Activated CD4-positive, alpha-beta T cell treated with anti-CD3 and anti-CD28 coated beads, Interleukin-2, amount 10 ng/mL, durations not matched to agents 24 days and 14 days (primary cell): ENCODE measurements at regions of chr1 and their contacts with region 1.

Region 1: GRCh38 chr1:63615768-63616420 is 22.7 kb downstream of the PGM1 start:
- DNase-seq: peak; percentile 92
- H3K4me3 Mint-ChIP-seq: no peak overlapping the region
- H3K27ac Mint-ChIP-seq: no peak overlapping the region
- H3K4me1 Mint-ChIP-seq: peaks cover 7% of the 10 kb centered on the region
- H3K27me3 Mint-ChIP-seq: no peaks in the 10 kb centered on the region

Region 2: GRCh38 chr1:63601061-63601460 is 14.8 kb before region 1 on chr1:
- intact Hi-C with region 1: no loop called
- DNase-seq: no peak
- H3K4me3 Mint-ChIP-seq: no peak overlapping the region
- H3K27ac Mint-ChIP-seq: no peak overlapping the region
- H3K4me1 Mint-ChIP-seq: peaks cover 9% of the 10 kb centered on the region
- H3K27me3 Mint-ChIP-seq: no peaks in the 10 kb centered on the region

Region 3: DNA sequence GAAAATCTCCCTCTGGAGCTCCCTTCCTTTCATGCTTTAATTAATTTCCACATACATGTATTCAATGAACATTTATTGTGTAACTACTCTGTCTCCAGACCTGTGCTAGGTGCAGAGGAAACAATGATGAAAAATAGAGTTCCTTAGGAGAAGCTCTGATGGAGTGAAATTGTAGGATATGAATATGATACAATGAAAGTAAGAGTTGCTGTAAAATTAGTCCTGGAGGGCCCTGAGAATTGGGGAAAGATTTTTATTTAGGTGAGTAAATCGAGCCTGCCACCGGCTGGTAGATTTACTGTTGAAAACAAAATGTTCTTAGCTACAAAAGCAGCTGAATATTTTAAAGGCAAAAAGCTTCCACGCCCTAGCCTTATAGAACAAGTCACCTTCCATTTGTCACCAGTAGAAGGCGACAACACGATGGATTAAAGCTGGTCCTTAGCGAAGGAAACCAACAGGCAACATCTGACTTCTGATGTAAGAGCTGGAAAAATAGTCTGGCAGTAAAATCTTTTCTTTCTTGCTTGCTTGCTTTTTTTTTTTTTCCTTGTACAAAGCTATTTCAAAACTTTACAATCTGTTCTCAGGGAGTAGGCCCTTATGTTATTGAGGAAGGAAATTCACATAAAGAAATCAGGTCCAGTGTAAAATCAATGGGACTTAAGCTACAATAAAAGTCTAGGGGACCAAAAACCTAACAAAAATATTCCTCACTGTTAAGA is 76.0 kb after region 1 on chr1:
- intact Hi-C with region 1: loop called (anchors 5 kb)
- DNase-seq: peak; percentile 81
- H3K4me3 Mint-ChIP-seq: no peak overlapping the region
- H3K27ac Mint-ChIP-seq: no peak overlapping the region
- H3K4me1 Mint-ChIP-seq: peaks cover 1% of the 10 kb centered on the region
- H3K27me3 Mint-ChIP-seq: peaks cover 2% of the 10 kb centered on the region

Region 4: GRCh38 chr1:63773815-63774616 is 158.1 kb after region 1 on chr1 and contains the start of gene ROR1:
- intact Hi-C with region 1: loop called (anchors 10 kb)
- DNase-seq: peak; percentile 87
- H3K4me3 Mint-ChIP-seq: peak within 1 kb of the TSS; percentile 88
- H3K27ac Mint-ChIP-seq: no peak within 1 kb of the TSS
- H3K4me1 Mint-ChIP-seq: peaks cover 12% of the 10 kb centered on the region
- H3K27me3 Mint-ChIP-seq: peaks cover 68% of the 10 kb centered on the region
- total RNA-seq, gene ROR1: 0.09 TPM in 1 of 2 replicates, not detected in the other

Region 5: DNA sequence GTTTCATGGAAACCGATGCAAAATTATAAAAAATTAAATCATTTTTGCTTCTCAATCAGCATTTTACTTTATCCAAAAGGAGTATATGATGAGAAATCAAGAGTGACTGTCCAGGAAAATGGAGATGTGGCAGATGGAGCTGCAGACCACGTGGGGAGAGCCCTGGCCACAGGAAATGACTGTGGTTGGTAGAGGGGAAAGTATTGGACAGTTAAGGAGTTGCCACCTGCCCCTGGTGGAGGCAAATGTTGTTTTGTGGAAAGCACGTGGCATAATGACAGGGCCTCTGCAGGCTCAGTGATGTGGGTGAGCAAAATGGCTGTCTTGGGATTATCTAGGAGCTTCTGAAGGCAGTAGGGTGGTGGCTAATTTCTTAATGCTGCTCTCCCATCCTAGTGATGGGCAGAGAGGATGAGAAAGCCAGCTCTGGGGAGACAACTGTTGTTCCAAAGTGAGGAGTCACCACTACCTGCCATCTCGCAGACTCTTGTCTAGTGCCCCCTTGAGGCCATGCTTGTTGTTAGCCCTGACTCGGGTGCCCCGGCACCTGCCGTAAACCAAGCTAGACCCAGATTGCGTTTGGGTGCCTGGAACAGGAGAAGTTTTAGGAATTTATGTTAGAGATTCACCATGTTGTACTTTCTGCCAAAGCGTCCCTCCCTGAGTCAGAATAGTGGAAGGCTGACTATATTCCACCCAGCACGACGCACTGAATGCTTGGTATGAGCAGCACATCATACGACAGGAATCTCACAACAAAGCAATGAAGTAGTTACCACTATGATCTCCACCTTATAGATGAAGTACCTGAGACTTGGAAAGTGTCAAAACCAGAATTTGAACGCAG is 301.9 kb after region 1 on chr1:
- intact Hi-C with region 1: loop called (anchors 5 kb)
- DNase-seq: peak; percentile 66
- H3K4me3 Mint-ChIP-seq: no peak overlapping the region
- H3K27ac Mint-ChIP-seq: no peak overlapping the region
- H3K4me1 Mint-ChIP-seq: no peaks in the 10 kb centered on the region
- H3K27me3 Mint-ChIP-seq: peaks cover 2% of the 10 kb centered on the region

Region 6: GRCh38 chr1:64136752-64137411 is 521.0 kb after region 1 on chr1:
- intact Hi-C with region 1: loop called (anchors 1 kb)
- DNase-seq: peak; percentile 90
- H3K4me3 Mint-ChIP-seq: no peak overlapping the region
- H3K27ac Mint-ChIP-seq: no peak overlapping the region
- H3K4me1 Mint-ChIP-seq: no peaks in the 10 kb centered on the region
- H3K27me3 Mint-ChIP-seq: peaks cover 3% of the 10 kb centered on the region